ENCODE measurements at regions of chr14 and their contacts with region 1.

Region 1: DNA sequence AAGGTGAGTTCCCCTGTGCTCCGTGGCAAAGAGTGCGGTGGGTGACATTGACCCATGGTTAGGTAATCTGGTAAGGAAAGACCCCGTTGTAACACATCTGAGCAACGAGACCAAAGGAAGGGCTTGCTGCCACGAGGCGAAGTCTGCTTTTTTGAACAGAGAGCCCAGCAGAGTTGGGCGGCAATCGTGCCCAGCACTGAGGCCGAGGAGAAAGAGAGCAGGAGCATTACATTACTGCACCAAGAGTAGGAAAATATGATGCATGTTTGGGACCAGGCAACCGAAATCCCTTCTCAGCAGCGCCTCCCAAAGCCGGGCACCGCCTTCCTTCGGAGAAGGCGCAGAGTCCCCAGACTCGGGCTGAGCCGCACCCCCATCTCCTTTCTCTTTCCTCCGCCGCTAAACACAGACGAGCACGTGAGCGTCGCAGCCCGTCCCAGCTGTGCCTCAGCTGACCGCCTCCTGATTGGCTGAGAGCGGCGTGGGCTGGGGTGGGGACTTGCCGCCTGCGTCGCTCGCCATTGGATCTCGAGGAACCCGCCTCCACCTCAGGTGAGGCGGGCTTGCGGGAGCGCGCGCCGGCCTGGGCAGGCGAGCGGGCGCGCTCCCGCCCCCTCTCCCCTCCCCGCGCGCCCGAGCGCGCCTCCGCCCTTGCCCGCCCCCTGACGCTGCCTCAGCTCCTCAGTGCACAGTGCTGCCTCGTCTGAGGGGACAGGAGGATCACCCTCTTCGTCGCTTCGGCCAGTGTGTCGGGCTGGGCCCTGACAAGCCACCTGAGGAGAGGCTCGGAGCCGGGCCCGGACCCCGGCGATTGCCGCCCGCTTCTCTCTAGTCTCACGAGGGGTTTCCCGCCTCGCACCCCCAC is at the start of gene HIF1A:
- DNase-seq: peak; percentile 96
- ATAC-seq: peak; percentile 84
- H3K4me3 ChIP-seq: peak within 1 kb of the TSS; percentile 97
- H3K27ac ChIP-seq: peak within 1 kb of the TSS; percentile 96
- H3K4me1 ChIP-seq: peaks cover 10% of the 10 kb centered on the region; the same call in 1 of the 2 replicates
- H3K27me3 ChIP-seq: no peaks in the 10 kb centered on the region
- CTCF ChIP-seq: peak in 1 of 3 experiments; percentile 33; a peak in 2 of 6 replicates
- EP300 ChIP-seq: no peak
- POLR2A ChIP-seq: peak; percentile 97
- RAD21 ChIP-seq: 0 out of 2 replicates have a peak, but pooled peaks have one; percentile 23
- polyA plus RNA-seq, gene HIF1A: 18.3 to 22.3 TPM

Region 2: GRCh38 chr14:60753264-60754119 is 941.6 kb before region 1 on chr14:
- CTCF ChIA-PET with region 1: no interaction called
- POLR2A ChIA-PET with region 1: no interaction called
- RAD21 ChIA-PET with region 1: no interaction called
- SMC1A ChIA-PET with region 1: no interaction called
- in situ Hi-C with region 1: no loop called
- intact Hi-C with region 1: loop called (anchors 10 kb)
- DNase-seq: peak; percentile 87
- ATAC-seq: peak; percentile 97
- H3K4me3 ChIP-seq: 0 out of 2 replicates have a peak overlapping the region, but pooled peaks have one; percentile 15
- H3K27ac ChIP-seq: peak overlapping the region; percentile 47
- H3K4me1 ChIP-seq: peaks cover 20% of the 10 kb centered on the region
- H3K27me3 ChIP-seq: no peaks in the 10 kb centered on the region
- CTCF ChIP-seq: no peak
- EP300 ChIP-seq: peak; percentile 91 to 95; a peak in 3 of 4 replicates
- POLR2A ChIP-seq: no peak
- RAD21 ChIP-seq: no peak

Region 3: DNA sequence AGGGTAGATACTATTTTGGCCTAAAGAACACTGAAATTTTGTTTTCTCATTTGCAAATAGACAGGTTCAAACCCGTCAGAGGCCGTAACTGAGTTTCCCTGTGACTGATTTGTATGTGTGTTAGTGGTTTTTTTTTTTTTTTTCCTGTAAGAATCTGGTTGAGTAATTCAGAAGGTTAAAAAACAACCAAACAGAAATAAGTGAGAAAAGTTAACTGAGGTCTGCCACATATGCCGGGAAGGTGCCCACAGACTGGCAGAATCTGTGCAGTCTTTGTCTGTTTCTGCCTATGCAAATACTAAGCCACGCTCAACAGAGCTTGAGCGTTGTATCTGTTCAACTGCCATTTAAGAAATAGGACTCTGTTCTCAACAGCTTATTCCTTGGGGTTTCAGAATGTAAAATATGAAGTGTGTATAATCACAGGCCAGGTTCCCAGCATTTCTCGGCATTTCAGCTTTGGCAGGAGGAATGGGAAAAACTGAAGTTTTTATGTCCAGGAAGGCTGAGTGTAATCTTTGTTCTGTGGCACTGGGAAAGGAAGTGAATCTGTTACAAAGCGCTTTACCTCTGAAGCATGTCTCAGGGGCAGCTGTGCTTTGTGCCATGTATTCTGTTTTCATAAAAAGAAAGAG is 191.8 kb before region 1 on chr14:
- CTCF ChIA-PET with region 1: interaction called, 4 read pairs
- POLR2A ChIA-PET with region 1: no interaction called
- RAD21 ChIA-PET with region 1: interaction called, 21 read pairs
- SMC1A ChIA-PET with region 1: interaction called, 10 read pairs
- in situ Hi-C with region 1: no loop called
- intact Hi-C with region 1: no loop called
- DNase-seq: peak; percentile 94
- ATAC-seq: peak; percentile 93
- H3K4me3 ChIP-seq: peak overlapping the region; percentile 19; the same call in 1 of the 2 replicates
- H3K27ac ChIP-seq: peak overlapping the region; percentile 95
- H3K4me1 ChIP-seq: peaks cover 30% of the 10 kb centered on the region
- H3K27me3 ChIP-seq: no peaks in the 10 kb centered on the region
- CTCF ChIP-seq: no peak
- EP300 ChIP-seq: peak; percentile 30 to 87; a peak in 3 of 4 replicates
- POLR2A ChIP-seq: no peak
- RAD21 ChIP-seq: no peak

Region 4: GRCh38 chr14:61668282-61668681 is 26.8 kb before region 1 on chr14:
- CTCF ChIA-PET with region 1: interaction called, 3 read pairs
- POLR2A ChIA-PET with region 1: interaction called, 18 read pairs
- RAD21 ChIA-PET with region 1: interaction called, 28 read pairs
- SMC1A ChIA-PET with region 1: interaction called, 53 read pairs
- in situ Hi-C with region 1: no loop called
- intact Hi-C with region 1: no loop called
- DNase-seq: no peak
- ATAC-seq: no peak
- H3K4me3 ChIP-seq: no peak overlapping the region
- H3K27ac ChIP-seq: no peak overlapping the region
- H3K4me1 ChIP-seq: peaks cover 27% of the 10 kb centered on the region
- H3K27me3 ChIP-seq: no peaks in the 10 kb centered on the region
- CTCF ChIP-seq: no peak
- EP300 ChIP-seq: no peak
- POLR2A ChIP-seq: no peak
- RAD21 ChIP-seq: no peak

Region 5: GRCh38 chr14:61710853-61711817 is 16.1 kb after region 1 on chr14:
- CTCF ChIA-PET with region 1: interaction called, 10 read pairs
- POLR2A ChIA-PET with region 1: interaction called, 8 read pairs
- RAD21 ChIA-PET with region 1: interaction called, 11 read pairs
- SMC1A ChIA-PET with region 1: interaction called, 57 read pairs
- in situ Hi-C with region 1: no loop called
- intact Hi-C with region 1: no loop called
- DNase-seq: no peak
- ATAC-seq: peak; percentile 43
- H3K4me3 ChIP-seq: 0 out of 2 replicates have a peak overlapping the region, but pooled peaks have one; percentile 17
- H3K27ac ChIP-seq: peak overlapping the region; percentile 33; the same call in 1 of the 2 replicates
- H3K4me1 ChIP-seq: peaks cover 36% of the 10 kb centered on the region
- H3K27me3 ChIP-seq: no peaks in the 10 kb centered on the region
- CTCF ChIP-seq: no peak
- EP300 ChIP-seq: no peak
- POLR2A ChIP-seq: no peak
- RAD21 ChIP-seq: no peak

Region 6: DNA sequence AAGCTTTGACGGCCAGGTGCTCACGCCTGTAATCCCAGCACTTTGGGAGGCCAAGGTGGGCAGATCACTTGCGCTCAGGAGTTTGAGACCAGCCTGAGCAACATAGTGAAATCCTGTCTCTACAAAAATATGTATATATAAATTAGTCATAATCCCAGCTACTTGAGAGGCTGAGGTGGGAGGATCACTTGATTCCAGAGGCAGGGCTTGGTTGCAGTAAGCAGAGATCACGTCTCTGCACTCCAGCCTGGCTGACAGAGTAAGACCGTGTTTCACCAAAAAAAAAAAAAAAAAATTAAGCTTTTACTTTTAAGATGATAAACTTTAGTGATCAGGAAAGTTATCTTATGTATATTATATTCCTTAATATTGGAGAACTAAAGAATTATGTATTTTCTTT is 49.2 kb after region 1 on chr14:
- CTCF ChIA-PET with region 1: interaction called, 6 read pairs
- POLR2A ChIA-PET with region 1: interaction called, 21 read pairs
- RAD21 ChIA-PET with region 1: interaction called, 52 read pairs
- SMC1A ChIA-PET with region 1: interaction called, 39 read pairs
- in situ Hi-C with region 1: no loop called
- intact Hi-C with region 1: no loop called
- DNase-seq: no peak
- ATAC-seq: no peak
- H3K4me3 ChIP-seq: no peak overlapping the region
- H3K27ac ChIP-seq: no peak overlapping the region
- H3K4me1 ChIP-seq: peaks cover 5% of the 10 kb centered on the region
- H3K27me3 ChIP-seq: no peaks in the 10 kb centered on the region
- CTCF ChIP-seq: no peak
- EP300 ChIP-seq: no peak
- POLR2A ChIP-seq: no peak
- RAD21 ChIP-seq: no peak

Region 7: DNA sequence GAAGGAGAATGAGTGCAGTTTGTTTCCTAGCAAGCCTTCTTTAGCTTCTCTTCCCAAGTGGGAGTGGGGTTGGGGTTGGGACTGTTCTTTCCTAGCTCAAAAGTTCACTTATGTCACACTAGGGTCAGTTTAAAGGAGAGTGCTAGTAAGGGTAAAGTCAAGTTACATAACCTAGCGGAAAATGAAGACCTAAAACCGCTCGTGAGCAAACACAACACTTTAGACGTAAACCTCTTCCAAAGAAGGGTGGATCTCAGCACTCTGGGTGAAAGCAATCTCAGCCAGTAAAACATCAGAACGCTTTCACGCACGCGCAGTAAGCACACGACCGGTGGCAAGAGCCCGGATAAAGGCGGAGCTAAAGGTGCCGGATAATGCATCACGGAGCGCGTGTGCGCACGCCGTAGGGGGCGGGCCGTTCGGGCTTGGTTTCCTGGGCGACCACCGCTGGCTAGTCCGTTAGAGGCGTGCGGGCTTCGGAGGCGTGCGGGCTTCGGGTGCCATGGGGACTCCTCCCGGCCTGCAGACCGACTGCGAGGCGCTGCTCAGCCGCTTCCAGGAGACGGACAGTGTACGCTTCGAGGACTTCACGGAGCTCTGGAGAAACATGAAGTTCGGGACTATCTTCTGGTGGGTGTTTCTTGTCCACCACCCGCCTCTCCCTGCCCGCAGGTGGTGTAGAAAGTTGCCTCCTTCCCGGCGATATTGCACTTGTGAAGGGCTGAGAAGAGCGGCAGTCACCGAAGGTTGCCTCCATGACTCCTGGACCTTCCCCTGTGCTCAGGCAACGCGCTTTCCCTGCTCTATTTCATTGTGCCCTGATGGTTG is 67.1 kb after region 1 on chr14 and contains the start of gene SNAPC1:
- CTCF ChIA-PET with region 1: interaction called, 3 read pairs
- POLR2A ChIA-PET with region 1: interaction called, 6 read pairs
- RAD21 ChIA-PET with region 1: interaction called, 4 read pairs
- SMC1A ChIA-PET with region 1: interaction called, 10 read pairs
- in situ Hi-C with region 1: no loop called
- intact Hi-C with region 1: no loop called
- DNase-seq: peak; percentile 96
- ATAC-seq: peak; percentile 99
- H3K4me3 ChIP-seq: peak within 1 kb of the TSS; percentile 98
- H3K27ac ChIP-seq: peak within 1 kb of the TSS; percentile 87
- H3K4me1 ChIP-seq: no peaks in the 10 kb centered on the region; the same call in 1 of the 2 replicates
- H3K27me3 ChIP-seq: no peaks in the 10 kb centered on the region
- CTCF ChIP-seq: no peak
- EP300 ChIP-seq: no peak
- POLR2A ChIP-seq: peak; percentile 93
- RAD21 ChIP-seq: no peak
- polyA plus RNA-seq, gene SNAPC1: 5.2 to 7.0 TPM

Measured in GM12878 (cell line).